Left colon (tissue), 2 donors: ENCODE measurements at regions of chr7 and their contacts with region 1.

Region 1: GRCh38 chr7:134669845-134670373 is 23.3 kb downstream of the BPGM start:
- DNase-seq: peak in 1 of 2 donors; percentile 55
- ATAC-seq: peak; percentile 45

Region 2: GRCh38 chr7:134567391-134567790 is 102.5 kb before region 1 on chr7:
- intact Hi-C with region 1: no loop called
- DNase-seq: no peak
- ATAC-seq: no peak

Region 3: DNA sequence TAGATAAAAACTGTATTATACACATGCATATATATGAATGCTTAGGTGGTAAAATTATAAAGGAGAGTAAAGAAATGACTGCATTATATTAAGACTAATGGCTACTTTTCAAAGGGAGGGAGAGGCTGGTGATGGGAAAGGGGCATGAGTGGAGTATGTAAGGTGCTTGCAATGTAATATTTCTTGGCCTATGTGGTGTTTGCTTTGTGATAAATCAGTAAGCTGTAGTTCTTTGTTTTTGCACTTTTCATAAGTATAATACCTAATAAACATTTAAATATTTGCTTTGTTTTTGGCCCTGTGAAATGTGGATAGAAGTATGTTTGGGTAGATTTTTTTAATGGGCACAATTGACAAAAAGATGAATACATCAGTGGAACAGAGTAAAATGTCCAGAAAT is 342.3 kb after region 1 on chr7:
- intact Hi-C with region 1: no loop called
- DNase-seq: no peak
- ATAC-seq: no peak

Region 4: GRCh38 chr7:135186841-135187253 is 516.9 kb after region 1 on chr7:
- intact Hi-C with region 1: loop called in 1 of 2 experiments (anchors 10 kb)
- DNase-seq: no peak
- ATAC-seq: no peak

Region 5: GRCh38 chr7:135736586-135737305 is 1066.8 kb after region 1 on chr7:
- intact Hi-C with region 1: no loop called
- DNase-seq: no peak
- ATAC-seq: no peak